ENCODE measurements at regions of chr19 and their contacts with region 1.

Region 1: GRCh38 chr19:6125571-6125989 is 9.9 kb upstream of the ACSBG2 start:
- DNase-seq: peak; percentile 59
- H3K4me3 Mint-ChIP-seq: no peak overlapping the region
- H3K27ac Mint-ChIP-seq: no peak overlapping the region
- H3K4me1 Mint-ChIP-seq: no peaks in the 10 kb centered on the region
- H3K27me3 Mint-ChIP-seq: no peaks in the 10 kb centered on the region
- CTCF ChIP-seq: peak; percentile 73

Region 2: DNA sequence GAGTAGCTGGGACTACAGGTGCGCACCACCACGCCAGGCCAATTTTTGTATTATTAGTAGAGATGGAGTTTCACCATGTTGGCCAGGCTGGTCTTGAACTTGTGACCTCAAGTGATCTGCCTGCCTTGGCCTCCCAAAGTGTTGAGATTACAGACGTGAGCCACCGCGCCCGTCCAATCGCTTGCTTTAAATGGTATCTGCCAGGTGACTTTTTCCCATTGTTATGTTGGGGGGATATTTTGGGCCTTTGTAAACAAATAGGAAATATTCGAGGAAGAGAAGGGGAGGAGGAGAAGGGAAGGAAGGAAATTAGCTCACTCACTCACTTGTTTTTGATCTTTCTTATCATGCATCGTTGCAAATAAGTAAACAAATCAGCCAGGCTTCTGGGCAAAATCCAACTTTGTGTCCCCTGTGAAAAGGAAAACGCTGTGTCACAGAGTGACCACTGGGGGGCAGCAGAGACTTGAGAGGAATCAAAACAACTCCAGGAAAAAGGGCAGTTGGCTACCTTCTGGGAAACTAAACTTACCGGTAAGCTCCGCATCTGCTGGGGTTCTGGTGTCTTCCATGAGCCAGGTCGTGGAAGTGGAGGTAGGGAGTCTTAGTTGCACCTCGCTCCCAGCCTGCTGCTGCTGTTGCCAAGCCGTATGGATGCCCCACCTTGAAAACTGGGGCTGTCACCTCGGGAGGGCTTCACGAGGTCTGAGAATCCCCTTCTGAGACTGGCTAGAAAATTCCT is 138.3 kb before region 1 on chr19:
- CTCF ChIA-PET with region 1: interaction called, 5 read pairs
- intact Hi-C with region 1: loop called (anchors 5 kb)
- DNase-seq: peak; percentile 73
- H3K4me3 Mint-ChIP-seq: peak overlapping the region; percentile 28
- H3K27ac Mint-ChIP-seq: no peak overlapping the region
- H3K4me1 Mint-ChIP-seq: no peaks in the 10 kb centered on the region
- H3K27me3 Mint-ChIP-seq: no peaks in the 10 kb centered on the region
- CTCF ChIP-seq: peak; percentile 76

Region 3: DNA sequence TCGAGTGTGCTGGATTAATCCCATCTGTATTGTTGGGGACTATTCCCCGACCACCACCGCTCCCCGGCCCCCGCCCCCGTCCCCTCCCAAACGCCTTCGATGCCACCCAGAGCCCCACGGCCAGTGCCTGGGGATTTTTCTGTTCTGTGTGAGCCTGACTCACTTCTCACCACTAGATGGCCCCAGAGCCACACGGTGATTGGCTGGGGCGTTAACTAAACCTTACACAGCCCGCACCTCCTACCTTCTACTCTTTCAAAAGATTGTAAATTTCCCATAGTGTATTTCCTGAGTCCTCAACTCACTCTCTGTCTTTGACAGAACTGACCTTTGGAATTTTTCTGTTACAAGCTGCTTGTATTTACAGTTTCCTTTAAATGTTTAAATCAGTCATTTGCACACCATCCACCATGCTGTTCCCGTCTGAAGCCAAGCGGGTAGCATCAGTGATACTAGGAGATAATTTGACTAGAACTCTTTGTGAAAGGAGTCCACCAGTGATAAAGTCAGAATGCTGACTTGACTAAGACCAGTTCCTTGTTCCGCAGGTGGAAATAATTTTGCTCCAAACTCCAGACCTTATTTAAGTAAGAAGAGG is 76.7 kb before region 1 on chr19:
- CTCF ChIA-PET with region 1: interaction called, 32 read pairs
- intact Hi-C with region 1: loop called (anchors 1 kb)
- DNase-seq: peak; percentile 72
- H3K4me3 Mint-ChIP-seq: no peak overlapping the region
- H3K27ac Mint-ChIP-seq: no peak overlapping the region
- H3K4me1 Mint-ChIP-seq: no peaks in the 10 kb centered on the region
- H3K27me3 Mint-ChIP-seq: no peaks in the 10 kb centered on the region
- CTCF ChIP-seq: peak; percentile 42

Region 4: DNA sequence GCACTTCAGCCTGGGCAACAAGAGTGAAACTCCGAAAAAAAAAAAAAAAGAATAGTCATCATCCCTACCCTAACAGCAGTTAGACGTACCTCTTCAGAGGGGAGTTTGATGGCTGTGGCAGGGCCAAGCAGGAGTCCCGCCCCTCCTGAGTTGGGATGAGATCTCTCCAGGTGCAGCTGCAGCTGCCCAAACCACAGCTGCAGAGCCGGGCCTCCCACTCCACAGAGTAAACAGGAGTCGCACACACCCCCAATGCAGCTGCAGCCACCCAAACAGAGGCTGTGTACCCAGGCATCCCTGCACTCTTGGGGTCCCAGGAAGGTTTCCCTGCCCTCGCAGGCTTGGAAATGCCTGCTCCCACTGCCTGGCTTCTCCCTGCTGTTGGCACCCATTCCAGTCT is 171.6 kb after region 1 on chr19:
- CTCF ChIA-PET with region 1: no interaction called
- intact Hi-C with region 1: loop called (anchors 5 kb)
- DNase-seq: no peak
- H3K4me3 Mint-ChIP-seq: no peak overlapping the region
- H3K27ac Mint-ChIP-seq: no peak overlapping the region
- H3K4me1 Mint-ChIP-seq: no peaks in the 10 kb centered on the region
- H3K27me3 Mint-ChIP-seq: no peaks in the 10 kb centered on the region
- CTCF ChIP-seq: no peak

Region 5: GRCh38 chr19:6354098-6354674 is 228.6 kb after region 1 on chr19:
- CTCF ChIA-PET with region 1: interaction called, 5 read pairs
- intact Hi-C with region 1: loop called (anchors 2 kb)
- DNase-seq: no peak
- H3K4me3 Mint-ChIP-seq: no peak overlapping the region
- H3K27ac Mint-ChIP-seq: no peak overlapping the region
- H3K4me1 Mint-ChIP-seq: peaks cover 9% of the 10 kb centered on the region
- H3K27me3 Mint-ChIP-seq: peaks cover 8% of the 10 kb centered on the region
- CTCF ChIP-seq: peak; percentile 48